ENCODE measurements at regions of chr3 and their contacts with region 1.

Region 1: DNA sequence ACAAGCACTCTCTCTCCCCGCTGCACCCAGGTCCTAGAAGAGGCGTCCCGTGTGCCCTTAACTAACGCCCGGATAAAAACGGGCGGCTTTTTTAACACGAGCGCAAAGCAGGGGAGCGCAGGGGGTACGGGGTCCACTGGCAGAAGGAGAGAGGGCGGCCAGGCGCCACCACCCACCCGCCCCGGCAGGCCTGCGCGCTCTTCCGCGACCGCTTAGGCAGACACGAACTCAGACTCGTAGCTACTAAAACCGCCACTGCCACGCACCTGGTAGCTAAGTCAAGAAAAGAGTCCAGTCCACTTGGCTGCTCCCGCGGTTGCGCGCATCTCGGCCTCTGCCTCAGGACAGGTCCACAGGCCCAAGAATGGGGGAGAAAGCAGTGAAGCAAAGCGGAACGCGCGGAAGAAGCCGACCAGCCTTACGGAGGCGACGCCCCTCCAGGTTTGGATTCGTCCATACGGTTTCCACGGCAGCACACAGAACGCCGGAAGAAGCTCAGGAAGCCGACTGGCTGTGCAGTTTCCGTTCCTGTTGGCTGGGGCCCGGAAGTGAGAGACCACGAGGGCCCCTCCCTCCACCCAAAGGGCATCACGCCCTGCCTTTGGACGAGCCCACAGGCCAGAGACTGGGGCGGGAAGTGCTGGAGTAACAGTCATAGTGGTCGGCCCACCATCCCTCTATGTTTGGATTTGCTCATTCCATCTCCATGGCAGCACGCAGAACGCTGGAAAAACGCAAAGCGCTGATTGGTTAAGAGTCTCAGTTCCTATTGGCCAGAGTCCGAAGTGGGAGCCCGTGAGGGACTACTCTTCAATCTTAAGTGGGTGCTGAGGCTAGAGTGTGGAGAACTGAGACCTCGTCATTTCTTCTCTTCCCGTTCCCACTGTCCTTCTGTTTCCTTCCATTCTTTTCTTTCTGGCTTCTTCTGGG is at the start of gene ULK4:
- DNase-seq: peak; percentile 90 to 98
- ATAC-seq: peak; percentile 87 to 98 (median 89)
- H3K4me3 ChIP-seq: peak within 1 kb of the TSS; percentile 97
- H3K4me3 Mint-ChIP-seq: peak within 1 kb of the TSS; percentile 99
- H3K27ac ChIP-seq: peak within 1 kb of the TSS; percentile 96
- H3K27ac Mint-ChIP-seq: peak within 1 kb of the TSS; percentile 93 to 97
- H3K4me1 ChIP-seq: peaks cover 15% of the 10 kb centered on the region
- H3K4me1 Mint-ChIP-seq: peaks cover 24% of the 10 kb centered on the region in 2 donors
- H3K27me3 ChIP-seq: no peaks in the 10 kb centered on the region
- H3K27me3 Mint-ChIP-seq: no peaks in the 10 kb centered on the region
- CTCF ChIP-seq: no peak
- total RNA-seq, gene ULK4: 19.2 to 25.7 (median 21.2) TPM

Region 2: DNA sequence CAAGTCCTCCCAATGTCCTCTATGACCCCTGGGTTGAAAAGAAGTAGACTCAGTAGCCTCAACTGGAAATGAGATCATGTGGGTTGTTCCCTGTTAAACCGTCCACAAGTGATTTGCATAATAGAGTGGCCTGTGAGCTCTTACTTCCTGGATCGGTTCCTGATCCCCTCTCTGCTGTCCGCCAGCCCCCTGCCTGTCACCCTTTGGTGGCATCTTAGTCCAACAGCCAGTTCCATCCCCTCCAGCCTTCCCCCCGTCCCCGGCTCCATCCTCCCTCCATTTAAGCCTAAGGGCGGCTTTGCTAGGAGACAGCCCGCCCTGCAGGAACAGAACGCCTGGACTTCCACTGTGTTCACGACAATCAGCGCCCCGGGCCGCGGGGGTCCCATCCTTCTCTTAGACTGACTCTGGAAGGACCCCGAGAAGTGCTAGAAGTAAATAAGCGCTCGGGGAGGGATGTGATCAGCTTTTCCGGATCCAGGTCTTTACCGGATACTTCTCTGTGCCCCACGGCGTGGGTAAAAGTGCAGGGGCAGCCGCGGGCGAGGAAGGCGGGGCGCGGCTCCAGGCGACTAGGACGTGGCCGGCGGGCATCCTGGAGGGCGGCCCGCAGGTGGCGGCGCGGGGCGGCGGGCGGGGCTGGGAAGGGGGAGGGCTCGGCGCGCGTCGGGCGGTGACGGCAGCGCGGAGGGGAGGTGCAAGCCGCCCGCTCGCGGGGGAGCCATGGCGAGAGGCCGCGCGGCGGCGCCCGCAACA is 51.1 kb after region 1 on chr3:
- intact Hi-C with region 1: loop called (anchors 1 kb)
- DNase-seq: peak; percentile 69 to 87
- ATAC-seq: peak; percentile 72 to 88 (median 79)
- H3K4me3 ChIP-seq: peak overlapping the region; percentile 64
- H3K4me3 Mint-ChIP-seq: peak overlapping the region; percentile 92
- H3K27ac ChIP-seq: peak overlapping the region; percentile 98
- H3K27ac Mint-ChIP-seq: peak overlapping the region; percentile 76 to 83
- H3K4me1 ChIP-seq: peaks cover 24% of the 10 kb centered on the region
- H3K4me1 Mint-ChIP-seq: peaks cover 25 to 39% of the 10 kb centered on the region in 2 donors
- H3K27me3 ChIP-seq: no peaks in the 10 kb centered on the region
- H3K27me3 Mint-ChIP-seq: no peaks in the 10 kb centered on the region
- CTCF ChIP-seq: no peak

Region 3: GRCh38 chr3:42101048-42101447 is 139.0 kb after region 1 on chr3:
- intact Hi-C with region 1: loop called (anchors 5 kb)
- DNase-seq: no peak
- ATAC-seq: no peak
- H3K4me3 ChIP-seq: no peak overlapping the region
- H3K4me3 Mint-ChIP-seq: no peak overlapping the region
- H3K27ac ChIP-seq: no peak overlapping the region
- H3K27ac Mint-ChIP-seq: no peak overlapping the region
- H3K4me1 ChIP-seq: no peaks in the 10 kb centered on the region
- H3K4me1 Mint-ChIP-seq: peaks cover 0 to 12% of the 10 kb centered on the region in 2 donors
- H3K27me3 ChIP-seq: no peaks in the 10 kb centered on the region
- H3K27me3 Mint-ChIP-seq: no peaks in the 10 kb centered on the region
- CTCF ChIP-seq: no peak

Measured in natural killer cell (primary cell).